ENCODE measurements at regions of chr2 and their contacts with region 1.

Region 1: DNA sequence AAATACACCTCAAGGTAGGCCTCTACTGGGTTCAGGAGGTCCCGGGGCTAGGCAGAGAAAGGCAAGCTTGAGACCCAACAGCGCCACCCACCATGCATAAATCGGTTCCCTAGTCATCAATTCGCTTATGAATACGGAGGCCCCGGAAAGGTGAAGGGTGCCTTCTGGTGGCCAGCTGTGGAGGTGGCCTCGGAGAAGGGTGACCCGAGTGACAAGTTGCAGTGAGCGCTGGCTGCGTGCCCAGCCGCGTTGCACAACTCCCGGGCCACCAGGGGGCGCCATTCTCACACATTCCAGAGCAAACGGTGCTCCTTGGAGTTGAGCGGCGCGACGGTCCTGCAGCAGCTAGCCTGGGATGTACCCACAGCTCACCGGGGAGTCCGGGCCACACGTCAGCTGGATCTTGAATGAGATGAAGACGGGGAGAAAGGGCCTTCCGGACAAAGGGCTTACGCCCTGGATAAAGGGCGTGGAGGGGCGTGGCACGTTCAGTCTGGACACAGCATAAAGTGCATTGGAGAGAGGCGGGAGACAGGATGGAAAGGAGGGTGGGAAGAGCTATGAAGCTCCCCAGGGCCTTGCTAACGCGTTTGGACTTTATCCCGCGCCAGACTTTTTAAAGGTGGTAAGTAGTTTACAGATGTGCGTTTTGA is 20.4 kb downstream of the TMSB10 start:
- DNase-seq: peak; percentile 94 to 97 (median 95)
- ATAC-seq: peak; percentile 77 to 89 (median 85)
- H3K4me3 ChIP-seq: peak overlapping the region in 10 of 12 donors; percentile 27 to 60 (median 39)
- H3K27ac ChIP-seq: peak overlapping the region in 11 of 12 donors; percentile 38 to 94 (median 85)
- H3K4me1 ChIP-seq: peaks cover 0 to 37% (median 20%) of the 10 kb centered on the region in 12 donors
- H3K27me3 ChIP-seq: no peaks in the 10 kb centered on the region
- CTCF ChIP-seq: peak; percentile 95 to 99 (median 98)
- POLR2A ChIP-seq: no peak

Region 2: DNA sequence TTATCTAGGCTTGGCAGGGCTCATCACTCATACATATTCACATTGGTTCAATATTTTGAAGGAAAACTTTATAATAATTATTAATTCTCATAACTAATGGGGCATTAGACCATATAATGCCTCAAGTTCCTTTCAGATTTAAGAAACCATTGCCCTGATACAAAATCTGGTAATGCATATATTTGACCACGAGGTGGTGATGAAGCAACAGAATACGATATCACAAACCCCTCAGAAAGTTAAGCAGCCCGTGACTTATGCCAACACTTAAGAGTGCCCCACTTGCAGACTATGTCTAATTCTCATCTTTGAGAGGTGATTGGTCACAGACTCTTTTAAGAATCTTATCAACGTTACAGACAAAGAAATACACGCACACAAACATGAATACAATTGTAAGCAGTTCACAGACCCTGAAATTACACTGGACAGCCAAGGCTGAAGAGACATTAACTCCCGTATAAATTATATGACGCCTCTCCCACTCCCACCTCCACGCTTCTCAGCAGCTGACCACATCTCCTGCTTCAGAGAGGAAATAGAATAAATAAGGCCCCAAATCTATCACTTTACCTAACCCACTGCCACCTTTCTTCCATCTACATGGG is 430.2 kb before region 1 on chr2:
- intact Hi-C with region 1: loop called in 8 of 10 experiments (anchors 2 to 5 kb)
- DNase-seq: no peak
- ATAC-seq: peak in 3 of 4 donors; percentile 70 to 81 (median 71)
- H3K4me3 ChIP-seq: no peak overlapping the region
- H3K27ac ChIP-seq: no peak overlapping the region
- H3K4me1 ChIP-seq: peaks cover 0 to 3% (median 0%) of the 10 kb centered on the region in 12 donors
- H3K27me3 ChIP-seq: peaks cover 0 to 4% (median 0%) of the 10 kb centered on the region in 9 donors
- CTCF ChIP-seq: peak; percentile 52 to 81 (median 73)
- POLR2A ChIP-seq: no peak

Region 3: DNA sequence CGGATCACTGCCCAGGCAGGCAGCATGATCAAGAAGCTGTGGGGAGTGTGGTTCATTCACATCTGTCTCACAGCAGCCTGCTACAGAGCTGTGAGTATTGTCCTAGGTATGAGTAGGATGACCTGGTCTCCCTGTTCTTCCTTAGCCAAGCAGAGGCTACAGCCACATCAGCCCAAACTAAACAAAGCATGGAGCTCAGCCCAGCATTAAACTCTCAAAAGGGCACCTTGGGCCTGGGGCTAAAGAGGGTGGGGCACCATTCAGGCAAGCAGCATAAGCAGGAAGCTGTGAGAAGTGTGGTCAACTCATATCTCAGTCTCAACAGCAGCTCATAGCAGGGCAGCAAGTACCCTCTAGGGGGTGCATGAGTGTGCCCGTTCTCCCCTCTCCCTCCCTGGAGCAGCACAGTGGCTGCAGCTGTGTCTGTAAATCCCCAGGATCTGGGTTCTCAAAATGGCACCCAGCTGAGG is 184.5 kb before region 1 on chr2:
- intact Hi-C with region 1: no loop called
- DNase-seq: no peak
- ATAC-seq: peak in 3 of 4 donors; percentile 41 to 70 (median 49)
- H3K4me3 ChIP-seq: no peak overlapping the region
- H3K27ac ChIP-seq: no peak overlapping the region
- H3K4me1 ChIP-seq: no peaks in the 10 kb centered on the region
- H3K27me3 ChIP-seq: no peaks in the 10 kb centered on the region
- CTCF ChIP-seq: peak in 6 of 12 donors; percentile 10 to 27 (median 21)
- POLR2A ChIP-seq: no peak

Region 4: GRCh38 chr2:84905181-84906107 is 20.4 kb before region 1 on chr2 and contains the start of gene TMSB10:
- intact Hi-C with region 1: loop called in 6 of 10 experiments (anchors 1 to 2 kb)
- DNase-seq: peak; percentile 91 to 96 (median 92)
- ATAC-seq: peak; percentile 55 to 89 (median 81)
- H3K4me3 ChIP-seq: peak within 1 kb of the TSS; percentile 72 to 100 (median 94)
- H3K27ac ChIP-seq: peak within 1 kb of the TSS; percentile 94 to 100 (median 98)
- H3K4me1 ChIP-seq: peaks cover 0 to 39% (median 6%) of the 10 kb centered on the region in 12 donors
- H3K27me3 ChIP-seq: no peaks in the 10 kb centered on the region
- CTCF ChIP-seq: peak in 7 of 12 donors; percentile 19 to 51 (median 29)
- POLR2A ChIP-seq: peak in 1 of 2 donors; percentile 91
- total RNA-seq, gene TMSB10: 288 to 3,094 (median 492) TPM

Region 5: GRCh38 chr2:85011747-85012146 is 85.9 kb after region 1 on chr2:
- intact Hi-C with region 1: loop called in 5 of 10 experiments (anchors 2 to 5 kb)
- DNase-seq: no peak
- ATAC-seq: no peak
- H3K4me3 ChIP-seq: no peak overlapping the region
- H3K27ac ChIP-seq: no peak overlapping the region
- H3K4me1 ChIP-seq: peaks cover 7 to 90% (median 52%) of the 10 kb centered on the region in 12 donors
- H3K27me3 ChIP-seq: no peaks in the 10 kb centered on the region
- CTCF ChIP-seq: peak in 2 of 12 donors; percentile 7 to 15
- POLR2A ChIP-seq: no peak

Region 6: GRCh38 chr2:85288244-85288725 is 362.4 kb after region 1 on chr2:
- intact Hi-C with region 1: loop called in 2 of 10 experiments (anchors 10 kb)
- DNase-seq: no peak
- ATAC-seq: no peak
- H3K4me3 ChIP-seq: no peak overlapping the region
- H3K27ac ChIP-seq: no peak overlapping the region
- H3K4me1 ChIP-seq: peaks cover 0 to 15% (median 5%) of the 10 kb centered on the region in 12 donors
- H3K27me3 ChIP-seq: no peaks in the 10 kb centered on the region
- CTCF ChIP-seq: no peak
- POLR2A ChIP-seq: no peak

Measured in heart left ventricle (tissue), 16 donors.